ENCODE measurements at regions of chr9 and their contacts with region 1.

Region 1: DNA sequence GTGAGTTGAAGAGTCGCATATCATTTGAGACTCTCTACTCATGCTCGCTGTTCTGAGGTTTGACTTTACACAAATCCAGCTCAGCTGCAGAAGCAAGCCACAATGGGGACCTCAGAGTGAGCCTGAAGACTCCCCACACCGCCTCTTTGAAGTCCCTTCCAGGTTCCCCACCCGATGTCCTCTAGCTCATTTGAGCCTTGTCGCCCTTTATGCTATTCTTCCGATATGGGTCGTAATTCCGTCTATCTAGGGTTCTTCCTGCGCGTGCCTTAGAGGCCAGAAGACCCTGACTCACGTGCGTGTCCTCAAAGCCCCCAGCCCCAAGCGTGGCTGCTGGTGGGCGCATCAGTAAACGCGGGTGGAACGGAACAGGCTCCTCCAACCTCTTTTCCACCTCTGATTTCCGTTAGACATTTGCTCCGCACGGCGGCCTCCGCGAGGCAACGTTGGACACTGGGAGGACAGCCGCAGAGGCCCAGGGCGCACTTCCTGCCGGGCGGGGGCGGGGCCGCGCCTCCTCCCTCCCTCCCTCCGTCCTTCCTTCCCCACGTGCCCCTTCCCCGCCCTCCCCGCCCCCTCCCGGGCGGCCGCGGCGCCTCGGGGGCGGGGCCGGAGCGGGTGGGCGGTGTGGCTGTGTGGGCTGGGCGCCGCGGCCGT is at the start of gene SNX30:
- DNase-seq: peak; percentile 84
- H3K4me3 Mint-ChIP-seq: peak within 1 kb of the TSS; percentile 81
- H3K27ac Mint-ChIP-seq: peak within 1 kb of the TSS; percentile 74
- H3K4me1 Mint-ChIP-seq: peaks cover 63% of the 10 kb centered on the region
- H3K27me3 Mint-ChIP-seq: no peaks in the 10 kb centered on the region
- total RNA-seq, gene SNX30: 4.1 to 4.6 TPM

Region 2: GRCh38 chr9:111631071-111631971 is 1118.9 kb before region 1 on chr9 and contains the start of gene DNAJC25:
- CTCF ChIA-PET with region 1: no interaction called
- intact Hi-C with region 1: loop called (anchors 10 kb)
- DNase-seq: peak; percentile 97
- H3K4me3 Mint-ChIP-seq: peak within 1 kb of the TSS; percentile 92
- H3K27ac Mint-ChIP-seq: peak within 1 kb of the TSS; percentile 79
- H3K4me1 Mint-ChIP-seq: peaks cover 42% of the 10 kb centered on the region
- H3K27me3 Mint-ChIP-seq: no peaks in the 10 kb centered on the region
- total RNA-seq, gene DNAJC25: 3.4 to 3.9 TPM

Region 3: DNA sequence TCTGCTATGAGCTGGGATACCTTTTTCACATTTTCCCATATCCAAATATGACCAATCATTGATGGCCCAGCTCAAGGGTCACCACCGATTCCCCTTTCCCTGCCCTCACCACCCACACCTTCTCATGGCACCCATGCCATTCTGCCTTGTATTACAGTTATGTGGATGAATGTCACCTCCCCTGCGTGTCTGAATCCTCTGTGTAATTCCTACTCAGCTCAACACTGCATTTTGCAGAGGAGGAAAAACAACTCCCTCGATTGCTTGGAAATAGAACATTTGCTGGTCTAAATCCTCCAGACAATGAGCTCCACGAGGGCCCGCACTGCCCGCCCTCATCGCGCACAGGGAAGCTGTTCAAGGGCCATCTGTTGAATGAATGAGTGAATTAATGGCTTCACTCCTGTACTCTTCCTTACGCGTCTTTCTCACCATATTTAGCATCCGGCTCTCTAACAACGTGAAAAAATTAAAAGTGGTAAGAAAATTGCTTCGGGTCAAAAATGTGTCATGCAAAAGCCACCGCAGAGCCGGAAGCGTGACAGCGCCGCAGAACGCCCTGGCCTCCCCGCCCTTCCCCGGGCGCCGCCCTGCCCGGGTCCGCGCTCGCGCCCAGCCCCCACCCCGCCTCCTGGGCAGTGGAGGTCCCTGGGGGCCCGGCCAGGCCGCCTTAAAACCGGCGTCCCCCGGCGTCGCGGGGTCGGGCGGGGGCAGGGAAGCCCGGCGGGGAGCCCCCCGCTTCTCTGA is 575.8 kb before region 1 on chr9:
- CTCF ChIA-PET with region 1: no interaction called
- intact Hi-C with region 1: loop called (anchors 5 kb)
- DNase-seq: peak; percentile 86
- H3K4me3 Mint-ChIP-seq: peak overlapping the region; percentile 82
- H3K27ac Mint-ChIP-seq: peak overlapping the region; percentile 79
- H3K4me1 Mint-ChIP-seq: peaks cover 30% of the 10 kb centered on the region
- H3K27me3 Mint-ChIP-seq: peaks cover 19% of the 10 kb centered on the region

Region 4: DNA sequence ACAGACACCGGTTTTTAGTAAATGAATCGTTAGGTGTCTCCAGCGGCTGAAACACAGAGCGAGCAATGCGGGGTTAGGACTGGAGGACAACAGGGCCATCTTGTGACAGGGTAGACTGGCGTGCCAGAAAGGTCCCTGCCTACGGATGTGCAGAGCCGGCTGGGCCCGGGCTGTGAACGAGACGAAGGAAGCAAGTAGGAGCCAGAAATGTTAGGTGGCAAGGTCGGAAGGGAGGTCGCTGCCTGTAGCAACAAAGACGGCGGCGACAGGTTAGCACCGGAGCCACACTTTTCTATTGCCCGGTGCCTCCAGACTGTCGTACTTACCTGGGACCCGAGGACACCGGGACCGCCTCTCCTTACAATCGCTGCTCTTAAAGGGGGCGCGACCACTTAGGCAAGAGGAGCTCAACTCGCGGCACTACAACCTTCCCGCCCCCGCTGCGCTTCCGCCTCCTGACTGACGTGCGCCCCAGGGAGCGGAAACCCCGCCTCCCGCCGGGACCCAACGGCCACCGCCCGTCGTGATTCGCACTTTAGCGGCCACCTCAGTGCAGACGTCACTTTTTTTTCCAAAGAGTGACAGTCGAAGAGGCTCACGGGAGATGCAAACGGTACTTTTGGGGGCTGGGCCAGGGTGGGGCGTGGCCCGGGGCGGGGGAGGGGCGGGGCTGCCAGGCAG is 32.4 kb before region 1 on chr9 and contains the start of gene INIP:
- CTCF ChIA-PET with region 1: interaction called, 4 read pairs
- intact Hi-C with region 1: loop called (anchors 1 kb)
- DNase-seq: peak; percentile 97
- H3K4me3 Mint-ChIP-seq: peak within 1 kb of the TSS; percentile 97
- H3K27ac Mint-ChIP-seq: peak within 1 kb of the TSS; percentile 94
- H3K4me1 Mint-ChIP-seq: peaks cover 23% of the 10 kb centered on the region
- H3K27me3 Mint-ChIP-seq: no peaks in the 10 kb centered on the region
- total RNA-seq, gene INIP: 31.1 to 33.4 TPM

Region 5: DNA sequence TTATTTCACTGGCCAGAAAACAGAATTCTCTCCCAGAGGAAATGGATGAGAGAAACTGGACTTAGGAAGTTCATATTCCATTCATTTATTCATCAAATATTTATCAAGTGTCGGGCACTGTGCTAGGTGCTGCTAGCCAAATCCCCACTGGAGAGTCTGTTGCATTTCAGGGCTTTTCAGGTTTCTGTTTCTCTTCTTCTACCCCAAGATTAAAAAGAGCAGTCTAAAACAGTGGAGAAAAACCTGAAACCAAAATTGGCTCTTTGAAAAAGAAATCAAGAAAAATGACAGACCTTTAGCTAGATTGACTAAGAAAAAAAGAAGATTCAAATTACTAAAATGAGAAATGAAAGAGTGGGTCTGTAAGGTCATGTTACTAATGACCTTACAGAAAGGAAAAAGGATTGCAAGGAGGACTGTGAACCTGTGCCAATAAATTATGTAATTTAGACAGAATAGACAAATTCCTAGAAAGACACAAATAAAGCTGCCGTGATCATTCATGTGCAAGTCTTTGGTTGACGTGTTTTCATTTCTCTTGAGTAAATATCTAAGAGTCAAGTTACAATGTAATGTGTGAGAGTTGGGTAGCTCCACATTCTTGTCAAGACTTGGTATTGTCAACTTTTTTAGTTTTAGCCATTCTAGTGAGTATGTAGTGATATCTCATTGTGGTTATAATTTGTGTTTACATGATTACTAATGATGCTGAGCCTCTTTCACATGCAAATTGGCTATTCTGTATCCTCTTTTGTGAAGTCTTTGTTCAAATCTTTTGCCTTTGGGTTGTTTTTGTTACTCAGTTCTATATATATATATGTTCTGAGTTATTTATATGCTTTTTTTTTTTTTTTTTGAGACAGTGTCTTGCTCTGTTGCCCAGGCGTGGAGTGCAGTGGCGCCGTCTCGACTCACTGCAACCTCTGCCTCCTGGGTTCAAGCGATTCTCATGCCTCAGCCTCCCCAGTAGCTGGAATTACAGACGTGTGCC is 24.1 kb after region 1 on chr9:
- CTCF ChIA-PET with region 1: no interaction called
- intact Hi-C with region 1: loop called (anchors 1 kb)
- DNase-seq: no peak
- H3K4me3 Mint-ChIP-seq: no peak overlapping the region
- H3K27ac Mint-ChIP-seq: no peak overlapping the region
- H3K4me1 Mint-ChIP-seq: peaks cover 35% of the 10 kb centered on the region
- H3K27me3 Mint-ChIP-seq: no peaks in the 10 kb centered on the region

Region 6: GRCh38 chr9:113269355-113269754 is 519.1 kb after region 1 on chr9:
- CTCF ChIA-PET with region 1: no interaction called
- intact Hi-C with region 1: no loop called
- DNase-seq: no peak
- H3K4me3 Mint-ChIP-seq: no peak overlapping the region
- H3K27ac Mint-ChIP-seq: peak overlapping the region; percentile 57
- H3K4me1 Mint-ChIP-seq: peaks cover 23% of the 10 kb centered on the region
- H3K27me3 Mint-ChIP-seq: no peaks in the 10 kb centered on the region